ENCODE measurements at regions of chr2 and their contacts with region 1.

Region 1: DNA sequence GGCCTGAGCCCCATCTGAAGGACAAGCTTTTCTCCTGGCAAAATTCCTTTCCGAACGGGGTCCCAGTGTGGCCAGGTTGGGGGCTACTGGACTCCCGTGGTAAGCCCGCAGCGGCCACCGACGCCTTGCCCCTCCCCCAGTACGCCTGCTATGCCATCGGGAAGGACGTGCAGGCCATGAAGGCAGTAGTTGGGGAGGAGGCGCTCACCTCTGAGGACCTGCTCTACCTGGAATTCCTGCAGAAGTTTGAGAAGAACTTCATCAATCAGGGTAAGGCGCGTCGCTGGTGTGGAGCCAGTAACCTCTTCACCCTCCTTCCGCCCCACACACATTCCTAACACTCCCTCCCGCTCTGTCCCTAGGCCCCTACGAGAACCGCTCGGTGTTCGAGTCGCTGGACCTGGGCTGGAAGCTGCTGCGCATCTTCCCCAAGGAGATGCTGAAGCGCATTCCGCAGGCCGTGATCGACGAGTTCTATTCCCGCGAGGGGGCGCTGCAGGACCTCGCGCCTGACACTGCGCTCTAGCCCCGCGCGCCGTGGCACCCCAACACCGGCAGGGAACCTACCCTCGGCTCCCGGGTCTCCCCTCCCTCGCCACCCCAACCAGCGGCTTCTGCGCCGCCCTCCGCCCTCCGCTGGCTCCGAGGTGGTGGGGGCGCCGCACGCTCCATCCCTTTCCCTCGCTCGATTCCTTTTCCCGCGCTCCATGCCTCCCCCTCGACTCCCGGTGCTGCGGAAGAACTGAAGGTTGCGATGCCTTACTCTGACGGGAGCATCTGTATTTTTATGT is 13.6 kb upstream of the ANKRD53 start:
- DNase-seq: peak; percentile 67 to 90 (median 83)
- ATAC-seq: peak; percentile 97
- H3K4me3 ChIP-seq: peak overlapping the region; percentile 61 to 80
- H3K4me3 Mint-ChIP-seq: peak overlapping the region; percentile 80
- H3K27ac ChIP-seq: no peak overlapping the region
- H3K27ac Mint-ChIP-seq: no peak overlapping the region
- H3K4me1 ChIP-seq: peaks cover 12% of the 10 kb centered on the region
- H3K4me1 Mint-ChIP-seq: peaks cover 7% of the 10 kb centered on the region
- H3K27me3 ChIP-seq: peaks cover 7 to 9% of the 10 kb centered on the region in 2 experiments
- H3K27me3 Mint-ChIP-seq: peaks cover 26% of the 10 kb centered on the region
- CTCF ChIP-seq: peak; percentile 93

Region 2: GRCh38 chr2:70553584-70554337 is 411.0 kb before region 1 on chr2 and contains the start of gene TGFA:
- CTCF ChIA-PET with region 1: no interaction called
- POLR2A ChIA-PET with region 1: no interaction called
- intact Hi-C with region 1: loop called in 1 of 2 experiments (anchors 10 kb)
- DNase-seq: peak; percentile 28 to 85 (median 67)
- ATAC-seq: peak; percentile 71
- H3K4me3 ChIP-seq: peak within 1 kb of the TSS; percentile 56 to 72
- H3K4me3 Mint-ChIP-seq: peak within 1 kb of the TSS; percentile 92
- H3K27ac ChIP-seq: no peak within 1 kb of the TSS
- H3K27ac Mint-ChIP-seq: peak within 1 kb of the TSS; percentile 86
- H3K4me1 ChIP-seq: peaks cover 21% of the 10 kb centered on the region
- H3K4me1 Mint-ChIP-seq: peaks cover 29% of the 10 kb centered on the region
- H3K27me3 ChIP-seq: no peaks in the 10 kb centered on the region
- H3K27me3 Mint-ChIP-seq: peaks cover 4% of the 10 kb centered on the region
- CTCF ChIP-seq: peak; percentile 81
- total RNA-seq, gene TGFA: 0.58 to 1.0 TPM

Region 3: GRCh38 chr2:70977605-70978205 is 12.9 kb after region 1 on chr2:
- CTCF ChIA-PET with region 1: interaction called, 53 read pairs
- POLR2A ChIA-PET with region 1: no interaction called
- intact Hi-C with region 1: loop called (anchors 1 kb)
- DNase-seq: peak in 2 of 9 experiments; percentile 49 to 55
- ATAC-seq: peak; percentile 27
- H3K4me3 ChIP-seq: peak overlapping the region; percentile 59 to 61
- H3K4me3 Mint-ChIP-seq: peak overlapping the region; percentile 85
- H3K27ac ChIP-seq: peak overlapping the region; percentile 44 to 73
- H3K27ac Mint-ChIP-seq: peak overlapping the region; percentile 89
- H3K4me1 ChIP-seq: peaks cover 17% of the 10 kb centered on the region
- H3K4me1 Mint-ChIP-seq: peaks cover 20% of the 10 kb centered on the region
- H3K27me3 ChIP-seq: no peaks in the 10 kb centered on the region
- H3K27me3 Mint-ChIP-seq: no peaks in the 10 kb centered on the region
- CTCF ChIP-seq: peak; percentile 4

Region 4: DNA sequence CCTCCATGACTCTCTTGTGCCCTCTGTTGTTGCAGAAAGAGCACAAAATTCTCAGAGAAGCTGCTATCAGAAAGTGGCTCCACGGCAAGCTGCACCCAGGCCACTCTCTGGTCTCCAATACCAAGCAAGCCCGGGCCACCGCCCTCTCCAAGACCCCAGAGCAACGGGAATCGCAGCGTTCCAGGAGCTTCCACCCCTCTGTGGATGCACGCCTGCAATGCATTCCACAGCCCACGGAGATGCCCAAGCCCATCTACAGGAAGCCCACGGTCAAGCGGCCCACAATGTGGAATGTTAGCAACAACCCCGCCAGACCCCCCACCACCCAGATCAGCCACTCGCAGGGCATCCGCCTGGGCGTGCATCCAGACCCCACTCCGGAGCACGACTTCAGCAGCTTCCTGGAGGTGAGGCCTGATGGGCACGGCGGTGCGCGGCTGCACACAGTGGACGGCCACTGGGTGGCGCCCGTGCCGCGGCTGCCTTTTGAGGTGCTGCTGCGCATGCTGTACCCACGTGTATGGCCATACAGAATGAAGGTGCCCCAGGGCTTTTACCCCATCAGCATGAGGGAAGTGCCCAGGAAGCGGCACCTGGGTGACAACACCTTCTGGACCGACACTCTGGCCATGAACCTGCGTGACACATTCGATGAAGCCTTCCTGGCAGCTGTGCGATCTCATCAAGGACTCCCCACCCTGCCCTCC is 19.9 kb after region 1 on chr2:
- CTCF ChIA-PET with region 1: interaction called, 53 read pairs
- POLR2A ChIA-PET with region 1: interaction called, 4 read pairs
- intact Hi-C with region 1: no loop called
- DNase-seq: peak; percentile 67 to 88 (median 83)
- ATAC-seq: peak; percentile 100
- H3K4me3 ChIP-seq: no peak overlapping the region
- H3K4me3 Mint-ChIP-seq: peak overlapping the region; percentile 51
- H3K27ac ChIP-seq: no peak overlapping the region
- H3K27ac Mint-ChIP-seq: peak overlapping the region; percentile 6
- H3K4me1 ChIP-seq: peaks cover 11% of the 10 kb centered on the region
- H3K4me1 Mint-ChIP-seq: peaks cover 16% of the 10 kb centered on the region
- H3K27me3 ChIP-seq: no peaks in the 10 kb centered on the region
- H3K27me3 Mint-ChIP-seq: no peaks in the 10 kb centered on the region
- CTCF ChIP-seq: peak; percentile 84

Region 5: GRCh38 chr2:71000780-71001591 is 36.2 kb after region 1 on chr2:
- CTCF ChIA-PET with region 1: interaction called, 33 read pairs
- POLR2A ChIA-PET with region 1: interaction called, 3 read pairs
- intact Hi-C with region 1: loop called (anchors 1 kb)
- DNase-seq: peak; percentile 58 to 89 (median 81)
- ATAC-seq: peak; percentile 99
- H3K4me3 ChIP-seq: peak overlapping the region; percentile 39 to 44
- H3K4me3 Mint-ChIP-seq: peak overlapping the region; percentile 49
- H3K27ac ChIP-seq: peak overlapping the region in 1 of 2 experiments; percentile 48
- H3K27ac Mint-ChIP-seq: no peak overlapping the region
- H3K4me1 ChIP-seq: peaks cover 11% of the 10 kb centered on the region
- H3K4me1 Mint-ChIP-seq: peaks cover 12% of the 10 kb centered on the region
- H3K27me3 ChIP-seq: no peaks in the 10 kb centered on the region
- H3K27me3 Mint-ChIP-seq: peaks cover 5% of the 10 kb centered on the region
- CTCF ChIP-seq: peak; percentile 80